HCT116 (cell line): ENCODE measurements at regions of chr14 and their contacts with region 1.

Region 1: GRCh38 chr14:24299255-24300195 is at the starts of genes DHRS1 and NOP9:
- DNase-seq: peak; percentile 86
- ATAC-seq: peak; percentile 76
- H3K4me3 ChIP-seq: peak within 1 kb of the TSS; percentile 66 to 80
- H3K27ac ChIP-seq: peak within 1 kb of the TSS; percentile 77
- H3K4me1 ChIP-seq: peaks cover 17 to 31% of the 10 kb centered on the region in 2 experiments
- H3K27me3 ChIP-seq: no peaks in the 10 kb centered on the region
- CTCF ChIP-seq: no peak
- POLR2A ChIP-seq: peak; percentile 67
- RAD21 ChIP-seq: no peak
- total RNA-seq, gene DHRS1: 34.7 TPM
- total RNA-seq, gene NOP9: 39.4 TPM

Region 2: GRCh38 chr14:23984891-23985602 is 314.5 kb before region 1 on chr14:
- CTCF ChIA-PET with region 1: no interaction called
- POLR2A ChIA-PET with region 1: no interaction called
- RAD21 ChIA-PET with region 1: no interaction called
- intact Hi-C with region 1: loop called (anchors 10 kb)
- DNase-seq: no peak
- ATAC-seq: no peak
- H3K4me3 ChIP-seq: no peak overlapping the region
- H3K27ac ChIP-seq: no peak overlapping the region
- H3K4me1 ChIP-seq: peaks cover 3 to 19% of the 10 kb centered on the region in 2 experiments; a peak in 3 of 4 replicates
- H3K27me3 ChIP-seq: no peaks in the 10 kb centered on the region
- CTCF ChIP-seq: no peak
- POLR2A ChIP-seq: no peak
- RAD21 ChIP-seq: no peak

Region 3: DNA sequence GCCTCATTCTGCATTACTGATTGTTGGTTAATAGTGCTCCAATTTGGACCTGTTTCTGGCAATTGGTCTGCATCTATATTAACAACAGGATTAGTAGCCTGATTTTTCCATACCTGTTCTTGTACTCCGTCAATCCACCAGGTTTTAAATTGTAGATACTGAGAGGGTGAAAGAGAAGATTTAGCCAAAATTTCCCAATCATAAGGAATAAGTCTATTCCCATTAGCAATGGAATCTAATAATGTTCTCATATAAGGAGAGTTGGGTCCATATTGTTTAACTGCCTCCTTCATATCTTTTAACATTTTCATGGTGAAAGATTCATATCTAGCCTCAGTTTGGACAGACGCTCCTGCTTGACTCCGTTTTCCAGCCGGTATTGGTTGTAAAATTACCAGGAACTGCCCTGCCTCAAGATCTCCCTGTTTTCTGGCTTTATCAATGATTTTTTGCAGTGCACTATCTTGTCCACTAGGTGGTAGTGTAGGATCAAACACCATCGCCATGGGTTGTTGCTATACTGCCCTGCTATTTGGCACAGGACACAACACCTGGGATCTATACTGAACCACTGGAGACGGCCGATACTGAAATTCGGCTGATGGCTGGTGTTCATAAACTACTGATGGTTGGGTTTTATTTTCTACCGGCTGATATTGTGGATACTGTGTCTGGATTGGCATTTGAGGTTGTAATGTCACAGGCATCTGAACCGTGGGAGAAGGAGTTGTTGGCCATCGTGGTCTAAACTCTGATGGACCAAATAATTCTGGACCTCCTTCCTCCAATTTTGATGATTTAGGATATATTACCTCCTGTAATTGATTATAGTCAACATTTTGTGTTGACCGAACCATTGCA is 285.6 kb before region 1 on chr14:
- CTCF ChIA-PET with region 1: interaction called, 3 read pairs
- POLR2A ChIA-PET with region 1: no interaction called
- RAD21 ChIA-PET with region 1: no interaction called
- intact Hi-C with region 1: loop called (anchors 5 kb)
- DNase-seq: peak; percentile 78
- ATAC-seq: peak; percentile 99
- H3K4me3 ChIP-seq: no peak overlapping the region
- H3K27ac ChIP-seq: no peak overlapping the region
- H3K4me1 ChIP-seq: peaks cover 0 to 4% of the 10 kb centered on the region in 2 experiments; a peak in 1 of 4 replicates
- H3K27me3 ChIP-seq: no peaks in the 10 kb centered on the region
- CTCF ChIP-seq: peak; percentile 86 to 90 (median 87)
- POLR2A ChIP-seq: no peak
- RAD21 ChIP-seq: peak; percentile 95

Region 4: GRCh38 chr14:24058260-24058950 is 241.1 kb before region 1 on chr14:
- CTCF ChIA-PET with region 1: interaction called, 19 read pairs
- POLR2A ChIA-PET with region 1: no interaction called
- RAD21 ChIA-PET with region 1: no interaction called
- intact Hi-C with region 1: loop called (anchors 5 kb)
- DNase-seq: no peak
- ATAC-seq: peak; percentile 92
- H3K4me3 ChIP-seq: no peak overlapping the region
- H3K27ac ChIP-seq: no peak overlapping the region
- H3K4me1 ChIP-seq: peaks cover 0 to 3% of the 10 kb centered on the region in 2 experiments; a peak in 1 of 4 replicates
- H3K27me3 ChIP-seq: no peaks in the 10 kb centered on the region
- CTCF ChIP-seq: peak; percentile 72 to 89 (median 87); a peak in 5 of 6 replicates
- POLR2A ChIP-seq: no peak
- RAD21 ChIP-seq: peak; percentile 95

Region 5: DNA sequence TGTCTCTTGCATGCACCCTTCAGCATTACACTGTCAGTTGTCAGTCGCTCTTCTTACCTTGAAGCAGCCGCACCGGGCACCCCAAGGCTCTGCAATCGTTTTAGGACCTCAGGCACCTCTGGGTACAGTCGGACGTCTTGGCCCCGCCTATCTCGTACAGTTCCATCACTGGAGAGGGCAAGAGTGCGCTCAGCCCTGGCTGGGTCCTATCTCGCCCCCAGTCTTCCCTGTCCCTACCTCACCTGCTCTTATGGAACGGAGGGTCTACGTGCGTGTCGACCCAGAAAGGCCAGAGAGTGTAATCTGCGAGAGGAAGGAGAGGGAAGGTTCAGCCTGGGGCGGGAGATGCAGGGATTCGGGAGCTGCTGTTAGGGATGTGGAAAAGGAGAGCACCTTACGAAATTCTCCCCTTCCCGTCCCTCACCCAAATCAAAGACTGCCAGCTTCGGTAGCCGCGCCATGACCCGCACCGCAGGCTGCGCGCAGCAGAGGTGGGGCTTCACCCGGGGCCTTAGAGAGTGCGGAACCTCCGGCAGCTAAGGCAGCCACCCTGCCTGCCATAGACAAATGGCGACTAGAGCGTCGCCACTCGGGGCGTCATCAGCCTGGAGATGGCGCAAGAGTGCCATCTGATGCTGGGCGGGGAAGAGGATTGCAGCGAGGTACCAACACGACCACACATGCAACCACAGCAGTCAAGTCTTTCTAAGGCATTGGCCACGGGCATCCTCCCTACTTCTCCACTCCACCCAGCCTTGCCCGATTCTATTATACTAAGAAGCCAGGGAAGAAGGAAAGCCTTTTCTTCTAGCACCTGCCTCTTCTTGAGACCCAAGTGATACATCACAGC is 83.8 kb before region 1 on chr14 and contains the start of gene MDP1:
- CTCF ChIA-PET with region 1: interaction called, 10 read pairs
- POLR2A ChIA-PET with region 1: interaction called, 3 read pairs
- RAD21 ChIA-PET with region 1: no interaction called
- intact Hi-C with region 1: loop called (anchors 1 kb)
- DNase-seq: peak; percentile 78
- ATAC-seq: peak; percentile 72
- H3K4me3 ChIP-seq: peak within 1 kb of the TSS; percentile 87 to 97
- H3K27ac ChIP-seq: peak within 1 kb of the TSS; percentile 88
- H3K4me1 ChIP-seq: peaks cover 22 to 29% of the 10 kb centered on the region in 2 experiments
- H3K27me3 ChIP-seq: no peaks in the 10 kb centered on the region
- CTCF ChIP-seq: peak; percentile 23 to 64 (median 40); a peak in 3 of 6 replicates
- POLR2A ChIP-seq: peak; percentile 75
- RAD21 ChIP-seq: peak; percentile 61
- total RNA-seq, gene MDP1: 15.9 TPM

Region 6: GRCh38 chr14:24232121-24232644 is 67.3 kb before region 1 on chr14 and contains the start of gene NEDD8:
- CTCF ChIA-PET with region 1: interaction called, 4 read pairs
- POLR2A ChIA-PET with region 1: no interaction called
- RAD21 ChIA-PET with region 1: no interaction called
- intact Hi-C with region 1: loop called (anchors 1 kb)
- DNase-seq: peak; percentile 81
- ATAC-seq: peak; percentile 83
- H3K4me3 ChIP-seq: peak within 1 kb of the TSS; percentile 96 to 100
- H3K27ac ChIP-seq: peak within 1 kb of the TSS; percentile 94
- H3K4me1 ChIP-seq: peaks cover 14 to 22% of the 10 kb centered on the region in 2 experiments
- H3K27me3 ChIP-seq: no peaks in the 10 kb centered on the region
- CTCF ChIP-seq: no peak
- POLR2A ChIP-seq: peak; percentile 63
- RAD21 ChIP-seq: no peak
- total RNA-seq, gene NEDD8: 178 TPM

Region 7: GRCh38 chr14:24241829-24242443 is 57.6 kb before region 1 on chr14:
- CTCF ChIA-PET with region 1: interaction called, 71 read pairs
- POLR2A ChIA-PET with region 1: interaction called, 30 read pairs
- RAD21 ChIA-PET with region 1: interaction called, 7 to 9 read pairs
- intact Hi-C with region 1: loop called (anchors 1 kb)
- DNase-seq: peak; percentile 86
- ATAC-seq: peak; percentile 90
- H3K4me3 ChIP-seq: peak overlapping the region; percentile 72 to 75
- H3K27ac ChIP-seq: peak overlapping the region; percentile 99
- H3K4me1 ChIP-seq: peaks cover 11 to 40% of the 10 kb centered on the region in 2 experiments
- H3K27me3 ChIP-seq: no peaks in the 10 kb centered on the region
- CTCF ChIP-seq: peak in 1 of 3 experiments; percentile 57; a peak in 2 of 6 replicates
- POLR2A ChIP-seq: no peak
- RAD21 ChIP-seq: no peak